CD8-positive, alpha-beta T cell (primary cell): ENCODE measurements at regions of chr2 and their contacts with region 1.

Region 1: GRCh38 chr2:74002487-74003391 is 18.0 kb downstream of the TET3 start:
- DNase-seq: peak; percentile 54 to 91 (median 79)
- ATAC-seq: peak; percentile 94
- H3K4me3 ChIP-seq: peak overlapping the region; percentile 50 to 52
- H3K4me3 Mint-ChIP-seq: peak overlapping the region; percentile 88
- H3K27ac ChIP-seq: peak overlapping the region in 1 of 2 experiments; percentile 66
- H3K27ac Mint-ChIP-seq: peak overlapping the region; percentile 69
- H3K4me1 ChIP-seq: peaks cover 36% of the 10 kb centered on the region
- H3K4me1 Mint-ChIP-seq: peaks cover 76% of the 10 kb centered on the region
- H3K27me3 ChIP-seq: no peaks in the 10 kb centered on the region
- H3K27me3 Mint-ChIP-seq: no peaks in the 10 kb centered on the region
- CTCF ChIP-seq: no peak

Region 2: DNA sequence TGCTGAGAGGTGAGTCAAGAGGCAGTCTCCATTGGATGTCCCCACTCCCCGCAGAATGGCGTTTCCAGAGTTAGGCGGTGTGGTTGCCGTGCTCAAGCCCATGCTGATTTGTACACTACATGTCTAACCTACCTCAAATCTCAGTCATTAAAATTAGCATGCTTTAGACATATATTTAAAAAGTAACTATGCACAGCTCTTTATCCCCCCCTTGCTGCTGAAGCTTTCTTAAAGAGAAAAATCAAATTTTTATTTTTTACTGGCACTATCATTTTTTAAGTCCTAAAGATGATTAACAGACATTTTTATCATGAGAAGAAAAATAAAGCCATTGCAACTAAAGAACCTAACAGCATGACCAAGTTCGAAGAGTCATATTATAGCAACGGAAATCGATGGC is 102.1 kb after region 1 on chr2:
- CTCF ChIA-PET with region 1: no interaction called
- POLR2A ChIA-PET with region 1: no interaction called
- intact Hi-C with region 1: loop called in 1 of 2 experiments (anchors 10 kb)
- DNase-seq: peak in 1 of 9 experiments; percentile 30
- ATAC-seq: peak; percentile 40
- H3K4me3 ChIP-seq: no peak overlapping the region
- H3K4me3 Mint-ChIP-seq: no peak overlapping the region
- H3K27ac ChIP-seq: no peak overlapping the region
- H3K27ac Mint-ChIP-seq: no peak overlapping the region
- H3K4me1 ChIP-seq: no peaks in the 10 kb centered on the region
- H3K4me1 Mint-ChIP-seq: no peaks in the 10 kb centered on the region
- H3K27me3 ChIP-seq: no peaks in the 10 kb centered on the region
- H3K27me3 Mint-ChIP-seq: no peaks in the 10 kb centered on the region
- CTCF ChIP-seq: peak; percentile 26

Region 3: DNA sequence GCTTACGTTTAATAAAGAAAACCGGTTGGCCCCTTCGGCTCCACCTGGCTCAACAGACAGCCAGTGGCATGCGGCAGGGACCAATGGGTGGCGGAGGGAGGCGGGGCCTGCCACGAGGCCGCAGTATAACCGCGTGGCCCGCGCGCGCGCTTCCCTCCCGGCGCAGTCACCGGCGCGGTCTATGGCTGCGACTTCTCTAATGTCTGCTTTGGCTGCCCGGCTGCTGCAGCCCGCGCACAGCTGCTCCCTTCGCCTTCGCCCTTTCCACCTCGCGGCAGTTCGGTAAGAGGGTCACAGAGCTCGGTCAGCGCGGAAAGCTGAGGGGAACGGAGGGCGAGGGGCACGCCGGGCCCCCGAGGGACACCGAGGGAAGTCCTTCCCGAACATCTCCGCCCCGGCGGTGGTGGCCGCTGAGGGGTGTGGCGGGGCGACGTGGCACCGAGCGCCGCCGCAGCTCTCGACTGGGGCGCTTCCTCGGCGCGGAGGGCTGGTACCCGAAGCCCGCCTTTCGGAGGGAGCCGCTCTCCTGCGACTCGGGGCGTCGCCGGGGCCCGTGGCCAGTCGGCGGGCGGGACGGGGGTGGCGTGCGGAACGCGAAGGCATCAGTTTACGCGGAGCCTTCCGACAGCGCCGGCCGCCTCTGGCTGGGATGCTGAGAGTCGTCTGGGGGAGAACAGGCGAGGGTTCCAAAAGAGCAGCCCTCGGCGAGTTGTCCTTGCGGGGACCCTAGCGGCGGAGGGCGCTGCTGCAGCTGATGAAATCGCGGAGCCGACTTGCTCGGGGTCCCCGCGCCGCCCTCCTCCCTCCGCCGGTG is 195.9 kb after region 1 on chr2 and contains the start of gene MTHFD2:
- CTCF ChIA-PET with region 1: no interaction called
- POLR2A ChIA-PET with region 1: no interaction called
- intact Hi-C with region 1: loop called in 1 of 2 experiments (anchors 5 kb)
- DNase-seq: peak; percentile 74 to 93 (median 88)
- ATAC-seq: peak; percentile 82
- H3K4me3 ChIP-seq: peak within 1 kb of the TSS; percentile 78 to 86
- H3K4me3 Mint-ChIP-seq: peak within 1 kb of the TSS; percentile 98
- H3K27ac ChIP-seq: peak within 1 kb of the TSS; percentile 87 to 89
- H3K27ac Mint-ChIP-seq: peak within 1 kb of the TSS; percentile 99
- H3K4me1 ChIP-seq: peaks cover 17% of the 10 kb centered on the region
- H3K4me1 Mint-ChIP-seq: peaks cover 25% of the 10 kb centered on the region
- H3K27me3 ChIP-seq: no peaks in the 10 kb centered on the region
- H3K27me3 Mint-ChIP-seq: no peaks in the 10 kb centered on the region
- CTCF ChIP-seq: peak; percentile 77
- total RNA-seq, gene MTHFD2: 25.8 to 26.7 TPM